Activated B cell treated with CpG ODN at 0.5 μM for 24 hours (primary cell): ENCODE measurements at regions of chr6 and their contacts with region 1.

Region 1: DNA sequence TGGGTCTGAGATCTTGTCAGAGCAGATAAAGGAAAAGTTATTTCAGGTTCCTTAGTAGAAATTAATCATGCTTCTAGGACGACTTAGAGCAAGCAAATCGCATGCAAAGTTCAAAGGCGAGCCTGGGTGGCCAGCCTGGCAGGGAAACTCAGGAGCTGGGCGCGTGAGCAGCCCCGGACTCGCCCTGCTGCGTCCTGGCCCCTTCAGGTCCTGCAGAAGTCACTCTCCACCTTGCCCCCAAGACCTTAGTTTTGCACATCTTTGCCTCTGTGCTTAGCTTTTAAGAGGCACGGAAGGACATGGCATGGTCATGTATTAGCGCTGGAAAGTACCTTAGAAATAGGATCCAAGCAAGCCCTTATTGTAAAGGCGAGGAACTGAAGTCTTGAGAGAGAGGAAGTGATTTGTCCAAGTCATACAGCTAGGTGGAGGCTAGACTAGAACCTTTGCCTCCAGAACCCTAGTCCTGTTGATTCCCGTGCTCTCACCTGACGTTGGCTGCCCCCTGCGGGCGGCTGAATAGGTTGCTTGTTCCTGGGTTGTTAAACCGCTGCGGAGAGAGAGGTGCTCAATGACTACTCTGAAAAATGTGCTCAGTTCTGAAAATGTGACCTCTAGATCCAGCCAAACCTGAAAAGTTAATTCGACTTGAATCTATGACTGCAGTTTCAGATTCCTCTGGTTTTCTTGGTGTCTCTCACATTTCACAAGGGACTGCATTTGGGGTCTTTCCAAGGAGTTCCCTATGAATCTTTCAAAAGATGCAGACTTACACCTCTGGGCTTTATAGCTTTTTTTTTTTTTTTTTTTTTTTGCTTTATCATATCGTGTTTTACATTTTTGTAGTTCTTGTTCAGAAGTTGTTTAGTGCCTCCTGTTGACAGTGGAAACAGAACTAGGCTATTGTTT is 2.7 kb downstream of the MYB start:
- DNase-seq: peak; percentile 48
- ATAC-seq: peak; percentile 38
- H3K4me3 Mint-ChIP-seq: peak overlapping the region; percentile 87
- H3K27ac Mint-ChIP-seq: peak overlapping the region; percentile 57
- H3K4me1 Mint-ChIP-seq: peaks cover 30% of the 10 kb centered on the region
- H3K27me3 Mint-ChIP-seq: no peaks in the 10 kb centered on the region
- CTCF ChIP-seq: no peak

Region 2: GRCh38 chr6:134247231-134247833 is 936.5 kb before region 1 on chr6:
- CTCF ChIA-PET with region 1: no interaction called
- POLR2A ChIA-PET with region 1: no interaction called
- intact Hi-C with region 1: loop called (anchors 5 kb)
- DNase-seq: peak; percentile 44
- ATAC-seq: peak; percentile 82
- H3K4me3 Mint-ChIP-seq: peak overlapping the region; percentile 47
- H3K27ac Mint-ChIP-seq: peak overlapping the region; percentile 97
- H3K4me1 Mint-ChIP-seq: peaks cover 59% of the 10 kb centered on the region
- H3K27me3 Mint-ChIP-seq: no peaks in the 10 kb centered on the region
- CTCF ChIP-seq: no peak

Region 3: DNA sequence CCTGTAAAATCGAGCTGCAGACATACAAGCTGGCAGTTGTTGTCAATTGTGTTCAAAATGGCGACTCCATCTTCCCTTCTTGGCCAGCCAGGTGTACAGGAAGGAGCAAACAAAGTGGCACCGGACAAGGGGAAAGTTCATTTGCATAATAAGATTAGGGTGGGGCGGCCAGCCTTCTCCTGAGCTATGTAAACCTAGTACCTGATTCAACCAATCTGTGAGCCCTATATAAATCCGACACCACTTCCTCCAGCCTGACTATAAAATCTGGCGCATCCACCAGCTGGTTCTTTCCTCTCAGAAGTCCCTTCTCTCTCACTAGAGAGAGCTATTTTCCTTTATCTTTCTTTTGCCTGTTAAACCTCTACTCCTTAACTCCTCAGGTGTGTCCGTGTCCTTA is 121.1 kb before region 1 on chr6:
- CTCF ChIA-PET with region 1: no interaction called
- POLR2A ChIA-PET with region 1: no interaction called
- intact Hi-C with region 1: no loop called
- DNase-seq: no peak
- ATAC-seq: no peak
- H3K4me3 Mint-ChIP-seq: no peak overlapping the region
- H3K27ac Mint-ChIP-seq: no peak overlapping the region
- H3K4me1 Mint-ChIP-seq: peaks cover 14% of the 10 kb centered on the region
- H3K27me3 Mint-ChIP-seq: no peaks in the 10 kb centered on the region
- CTCF ChIP-seq: no peak

Region 4: DNA sequence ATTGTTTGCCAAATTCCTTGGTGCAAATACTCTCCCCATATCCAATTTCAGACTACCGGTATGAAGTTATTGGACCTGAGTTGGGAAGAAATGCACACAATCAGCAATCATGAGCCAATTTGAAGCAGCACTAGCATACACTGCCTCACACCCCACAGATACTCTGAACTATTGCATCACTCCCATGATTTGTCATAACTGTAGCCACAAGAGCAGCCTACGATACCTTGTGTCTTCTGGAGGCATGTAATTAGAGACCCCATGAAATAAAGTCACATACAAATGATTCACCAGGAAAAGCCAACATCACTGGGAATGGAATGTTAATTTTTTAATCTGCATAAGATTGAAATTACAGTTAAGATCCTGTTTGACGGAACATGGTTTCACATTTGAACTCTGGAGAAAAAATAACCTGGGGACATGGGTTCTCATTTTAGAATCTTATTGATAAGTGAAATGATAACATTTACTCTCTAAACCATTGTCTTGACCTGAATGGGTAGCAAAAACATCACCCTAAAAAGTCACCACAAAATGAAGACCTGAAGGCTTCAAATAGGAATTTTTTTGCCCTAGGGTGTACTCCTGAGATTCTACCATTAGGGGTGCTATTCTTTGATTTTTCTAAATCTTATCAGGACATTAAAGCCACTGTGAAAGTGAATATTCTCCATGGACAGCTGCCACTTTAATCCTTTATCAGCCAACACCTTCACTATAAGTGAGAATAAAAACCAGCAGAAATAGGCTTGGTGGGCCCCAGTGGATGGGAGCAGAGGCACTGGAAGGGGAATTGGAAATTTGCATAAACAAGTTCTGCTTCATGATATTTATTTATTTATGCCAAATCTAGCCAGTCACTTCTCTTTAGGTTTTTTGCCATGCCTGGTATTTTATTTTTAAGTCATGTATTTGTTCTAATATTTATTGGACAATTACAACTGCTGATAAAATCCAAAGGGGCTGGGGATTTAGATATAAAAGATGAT is 94.7 kb before region 1 on chr6:
- CTCF ChIA-PET with region 1: interaction called, 3 read pairs
- POLR2A ChIA-PET with region 1: no interaction called
- intact Hi-C with region 1: loop called (anchors 2 kb)
- DNase-seq: no peak
- ATAC-seq: peak; percentile 86
- H3K4me3 Mint-ChIP-seq: peak overlapping the region; percentile 64
- H3K27ac Mint-ChIP-seq: no peak overlapping the region
- H3K4me1 Mint-ChIP-seq: peaks cover 34% of the 10 kb centered on the region
- H3K27me3 Mint-ChIP-seq: peaks cover 2% of the 10 kb centered on the region
- CTCF ChIP-seq: no peak

Region 5: DNA sequence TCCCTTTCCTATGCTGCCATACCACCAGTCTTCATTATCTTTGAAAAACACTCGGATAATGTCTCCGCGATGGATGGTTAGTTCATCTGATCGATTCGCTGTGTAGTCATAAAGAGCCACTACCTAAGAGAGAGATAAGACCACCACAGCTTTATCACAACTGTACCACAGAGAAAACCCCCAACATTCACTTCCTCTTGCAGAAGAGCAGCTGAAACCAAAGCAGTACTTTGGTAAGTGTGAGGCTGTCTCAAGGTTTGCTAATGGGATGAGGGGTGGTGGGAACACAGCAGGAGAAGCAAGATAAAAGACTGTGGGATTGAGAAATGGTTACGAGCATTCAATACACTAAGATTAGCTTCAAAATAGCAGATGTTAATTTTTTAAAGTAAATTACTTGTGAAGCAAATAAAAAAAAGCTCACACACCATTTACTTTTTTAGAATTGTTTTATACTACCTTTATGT is 139.4 kb after region 1 on chr6:
- CTCF ChIA-PET with region 1: no interaction called
- POLR2A ChIA-PET with region 1: no interaction called
- intact Hi-C with region 1: loop called (anchors 2 kb)
- DNase-seq: no peak
- ATAC-seq: peak; percentile 92
- H3K4me3 Mint-ChIP-seq: peak overlapping the region; percentile 60
- H3K27ac Mint-ChIP-seq: no peak overlapping the region
- H3K4me1 Mint-ChIP-seq: peaks cover 13% of the 10 kb centered on the region
- H3K27me3 Mint-ChIP-seq: no peaks in the 10 kb centered on the region
- CTCF ChIP-seq: no peak

Region 6: GRCh38 chr6:135851442-135852271 is 667.9 kb after region 1 on chr6 and contains the start of gene PDE7B:
- CTCF ChIA-PET with region 1: no interaction called
- POLR2A ChIA-PET with region 1: interaction called, 5 read pairs
- intact Hi-C with region 1: loop called (anchors 2 kb)
- DNase-seq: peak; percentile 47
- ATAC-seq: peak; percentile 97
- H3K4me3 Mint-ChIP-seq: peak within 1 kb of the TSS; percentile 83
- H3K27ac Mint-ChIP-seq: peak within 1 kb of the TSS; percentile 82
- H3K4me1 Mint-ChIP-seq: peaks cover 58% of the 10 kb centered on the region
- H3K27me3 Mint-ChIP-seq: no peaks in the 10 kb centered on the region
- CTCF ChIP-seq: no peak
- total RNA-seq, gene PDE7B: 1.5 and 1.8 TPM in 2 replicates